Stomach (tissue), 19 donors: ENCODE measurements at regions of chr11 and their contacts with region 1.

Region 1: DNA sequence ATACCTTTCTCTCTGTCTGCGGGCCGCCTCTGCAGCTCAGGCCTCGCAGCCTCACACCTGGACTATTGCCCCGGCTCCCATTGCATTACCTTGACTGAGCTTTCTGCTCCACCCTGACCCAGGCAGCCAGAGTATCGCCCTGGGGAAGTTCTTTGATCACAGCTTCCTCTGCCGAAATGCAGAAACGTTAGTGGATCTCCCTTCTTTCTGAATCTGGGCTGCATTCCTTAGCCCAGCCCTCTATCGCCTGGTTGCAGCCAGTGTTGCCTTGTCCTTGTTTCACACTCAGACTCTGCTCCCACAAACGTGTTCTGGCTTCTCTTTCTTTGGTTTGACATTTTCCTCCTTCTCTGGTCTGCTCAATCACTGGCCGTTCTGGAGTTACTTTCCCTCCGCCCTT is 195.7 kb downstream of the ADAMTS15 start:
- DNase-seq: peak; percentile 44 to 60
- H3K4me3 ChIP-seq: no peak overlapping the region
- H3K27ac ChIP-seq: peak overlapping the region in 1 of 5 donors; percentile 25
- H3K4me1 ChIP-seq: peaks cover 14 to 44% (median 24%) of the 10 kb centered on the region in 4 donors
- H3K27me3 ChIP-seq: no peaks in the 10 kb centered on the region
- CTCF ChIP-seq: no peak
- EP300 ChIP-seq: no peak
- POLR2A ChIP-seq: no peak

Region 2: DNA sequence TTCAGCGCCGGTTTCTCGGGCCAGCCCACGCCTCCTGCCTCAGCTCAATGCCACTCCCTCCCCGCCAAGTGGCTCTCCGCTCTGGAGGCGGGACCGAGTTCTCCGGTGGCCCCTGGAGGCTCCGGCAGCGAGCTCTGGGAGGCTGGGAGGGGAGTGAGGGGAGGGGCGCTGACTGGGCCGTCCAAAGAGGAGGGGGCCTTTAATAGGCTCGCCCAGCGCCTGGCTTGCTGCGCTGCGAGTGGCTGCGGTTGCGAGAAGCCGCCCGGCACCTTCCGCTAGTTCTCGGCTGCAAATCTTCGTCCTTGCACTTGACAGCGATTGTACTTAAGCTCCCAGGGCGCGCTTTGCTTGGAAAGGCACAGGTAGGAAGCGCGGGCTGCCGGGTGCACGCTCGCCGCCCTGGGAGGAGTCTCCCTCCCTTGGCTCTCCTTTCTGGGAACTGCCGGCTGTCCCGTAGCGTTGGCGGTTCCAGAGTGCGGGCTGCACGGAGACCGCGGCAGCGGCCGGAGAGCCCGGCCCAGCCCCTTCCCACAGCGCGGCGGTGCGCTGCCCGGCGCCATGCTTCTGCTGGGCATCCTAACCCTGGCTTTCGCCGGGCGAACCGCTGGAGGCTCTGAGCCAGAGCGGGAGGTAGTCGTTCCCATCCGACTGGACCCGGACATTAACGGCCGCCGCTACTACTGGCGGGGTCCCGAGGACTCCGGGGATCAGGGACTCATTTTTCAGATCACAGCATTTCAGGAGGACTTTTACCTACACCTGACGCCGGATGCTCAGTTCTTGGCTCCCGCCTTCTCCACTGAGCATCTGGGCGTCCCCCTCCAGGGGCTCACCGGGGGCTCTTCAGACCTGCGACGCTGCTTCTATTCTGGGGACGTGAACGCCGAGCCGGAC is 195.5 kb before region 1 on chr11 and contains the start of gene ADAMTS15:
- intact Hi-C with region 1: loop called (anchors 10 kb)
- DNase-seq: peak; percentile 86 to 95
- H3K4me3 ChIP-seq: peak within 1 kb of the TSS; percentile 56 to 72 (median 58)
- H3K27ac ChIP-seq: peak within 1 kb of the TSS; percentile 64 to 84 (median 76)
- H3K4me1 ChIP-seq: peaks cover 26 to 47% (median 40%) of the 10 kb centered on the region in 4 donors
- H3K27me3 ChIP-seq: peaks cover 0 to 27% (median 11%) of the 10 kb centered on the region in 3 donors
- CTCF ChIP-seq: no peak
- EP300 ChIP-seq: no peak
- POLR2A ChIP-seq: no peak
- total RNA-seq, gene ADAMTS15: 1.4 to 23.5 (median 2.2) TPM

Region 3: GRCh38 chr11:130545449-130546072 is 98.6 kb before region 1 on chr11:
- intact Hi-C with region 1: no loop called
- DNase-seq: no peak
- H3K4me3 ChIP-seq: no peak overlapping the region
- H3K27ac ChIP-seq: no peak overlapping the region
- H3K4me1 ChIP-seq: peaks cover 0 to 7% (median 2%) of the 10 kb centered on the region in 4 donors
- H3K27me3 ChIP-seq: no peaks in the 10 kb centered on the region
- CTCF ChIP-seq: no peak
- EP300 ChIP-seq: no peak
- POLR2A ChIP-seq: no peak